AG04449 (cell line): ENCODE measurements at regions of chr16 and their contacts with region 1.

Region 1: GRCh38 chr16:667780-668518 is at the start of gene RHOT2:
- DNase-seq: no peak
- H3K4me3 ChIP-seq: peak within 1 kb of the TSS; percentile 85
- CTCF ChIP-seq: peak; percentile 81

Region 2: DNA sequence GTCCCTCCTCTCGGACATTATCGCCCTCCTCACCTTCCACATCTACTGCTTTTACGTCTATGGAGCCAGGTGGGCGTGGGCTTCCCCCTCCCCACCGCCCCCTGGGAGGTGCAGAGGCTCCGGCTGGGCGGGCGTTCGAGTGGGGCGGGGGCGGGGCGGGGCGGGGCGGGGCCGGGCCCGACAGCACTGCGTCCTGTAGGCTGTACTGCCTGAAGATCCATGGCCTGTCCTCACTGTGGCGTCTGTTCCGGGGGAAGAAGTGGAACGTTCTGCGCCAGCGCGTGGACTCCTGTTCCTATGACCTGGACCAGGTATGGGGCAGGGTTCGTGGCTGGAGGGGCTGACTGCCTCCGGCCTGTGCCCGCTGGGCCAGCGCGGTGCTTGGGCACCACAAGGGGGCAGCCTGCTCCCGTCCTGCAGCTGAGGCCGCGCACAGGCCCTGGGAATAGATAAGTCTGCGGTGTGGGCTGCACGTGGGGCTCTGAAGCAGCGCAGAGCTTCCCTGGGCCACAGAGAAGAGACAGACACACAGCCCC is 89.0 kb before region 1 on chr16:
- CTCF ChIA-PET with region 1: interaction called, 12 read pairs
- POLR2A ChIA-PET with region 1: interaction called, 5 read pairs
- DNase-seq: no peak
- H3K4me3 ChIP-seq: no peak overlapping the region
- CTCF ChIP-seq: peak; percentile 91

Region 3: GRCh38 chr16:648781-649589 is 19.0 kb before region 1 on chr16 and contains the start of gene WDR90:
- CTCF ChIA-PET with region 1: interaction called, 13 read pairs
- POLR2A ChIA-PET with region 1: no interaction called
- DNase-seq: peak; percentile 28
- H3K4me3 ChIP-seq: peak within 1 kb of the TSS; percentile 74
- CTCF ChIP-seq: no peak

Region 4: GRCh38 chr16:679814-680622 is 12.1 kb after region 1 on chr16 and contains the start of gene STUB1:
- CTCF ChIA-PET with region 1: interaction called, 21 read pairs
- POLR2A ChIA-PET with region 1: interaction called, 6 read pairs
- DNase-seq: no peak
- H3K4me3 ChIP-seq: peak within 1 kb of the TSS; percentile 77
- CTCF ChIP-seq: no peak

Region 5: DNA sequence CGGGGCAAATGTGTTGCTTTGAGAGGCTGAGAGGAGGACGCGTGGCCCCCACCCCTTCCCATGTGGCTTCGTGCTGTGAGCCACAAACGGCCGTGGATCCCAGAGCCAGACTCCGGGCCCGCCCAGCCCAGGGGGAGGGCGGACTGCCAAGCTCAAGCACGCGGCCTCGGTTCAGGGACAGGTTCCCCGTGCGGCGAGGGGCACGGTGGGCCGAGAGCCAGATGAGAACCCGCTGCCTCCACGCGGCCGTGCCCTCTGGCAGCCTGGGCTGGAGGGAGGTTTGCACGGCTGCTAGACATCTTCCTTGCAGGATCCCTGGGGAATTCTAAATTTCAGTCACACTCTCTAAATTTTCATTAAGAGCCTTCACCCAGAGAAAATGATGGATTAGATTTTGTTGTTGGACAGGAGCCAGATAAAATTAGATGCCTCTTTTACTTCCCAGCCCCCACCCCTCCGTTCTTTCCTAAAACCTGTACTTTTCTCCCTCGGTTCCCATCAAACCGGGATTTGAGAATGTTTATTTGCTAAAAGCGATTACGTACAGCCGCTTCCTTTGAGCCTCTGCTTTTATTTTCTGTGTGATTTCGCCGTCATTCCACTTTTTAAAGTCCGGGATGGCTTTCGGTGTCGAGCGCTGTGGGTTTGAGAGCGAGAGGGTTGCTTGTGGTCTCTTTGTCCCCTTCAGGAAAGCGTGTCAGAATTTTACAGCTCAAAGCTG is 157.6 kb after region 1 on chr16:
- CTCF ChIA-PET with region 1: no interaction called
- POLR2A ChIA-PET with region 1: no interaction called
- DNase-seq: no peak
- H3K4me3 ChIP-seq: no peak overlapping the region
- CTCF ChIP-seq: no peak

Region 6: DNA sequence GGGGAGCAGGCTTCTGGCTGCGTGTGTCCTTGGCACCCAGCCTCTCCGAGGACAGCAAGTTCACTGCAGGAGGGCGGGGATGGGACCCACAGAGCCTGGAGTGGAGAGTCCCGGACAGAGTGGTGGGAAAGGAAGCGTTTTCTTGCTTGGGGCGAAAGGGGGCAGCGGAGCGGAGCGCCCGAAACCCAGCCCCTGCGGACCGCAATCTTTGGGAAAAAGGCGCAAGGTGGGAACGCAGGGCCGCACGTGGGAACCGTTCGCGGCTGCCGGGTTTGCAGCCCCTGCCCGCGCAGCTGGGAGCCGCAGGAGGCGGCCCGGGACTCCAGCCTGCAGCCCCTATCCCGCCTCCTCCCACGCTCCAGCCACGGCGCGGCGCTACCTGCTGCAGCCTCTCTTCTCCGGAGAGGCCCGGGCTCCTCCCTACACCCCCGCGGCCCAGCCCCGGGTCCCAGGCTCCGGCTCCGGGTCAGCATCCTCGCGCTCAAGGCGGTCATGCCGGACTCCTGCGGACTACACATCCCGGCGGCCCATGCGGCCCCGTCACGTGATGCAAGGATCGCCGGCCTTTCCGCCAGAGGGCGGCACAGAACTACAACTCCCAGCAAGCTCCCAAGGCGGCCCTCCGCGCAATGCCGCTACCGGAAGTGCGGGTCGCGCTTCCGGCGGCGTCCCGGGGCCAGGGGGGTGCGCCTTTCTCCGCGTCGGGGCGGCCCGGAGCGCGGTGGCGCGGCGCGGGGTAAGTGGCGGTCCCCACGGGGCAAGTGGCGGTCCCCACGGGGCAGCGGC is 1379.6 kb after region 1 on chr16 and contains the starts of genes NTHL1 and TSC2:
- CTCF ChIA-PET with region 1: no interaction called
- POLR2A ChIA-PET with region 1: no interaction called
- DNase-seq: peak; percentile 70
- H3K4me3 ChIP-seq: peak within 1 kb of the TSS; percentile 86
- CTCF ChIP-seq: peak; percentile 48